GM18951 (cell line): ENCODE measurements at regions of chr15 and their contacts with region 1.

Region 1: DNA sequence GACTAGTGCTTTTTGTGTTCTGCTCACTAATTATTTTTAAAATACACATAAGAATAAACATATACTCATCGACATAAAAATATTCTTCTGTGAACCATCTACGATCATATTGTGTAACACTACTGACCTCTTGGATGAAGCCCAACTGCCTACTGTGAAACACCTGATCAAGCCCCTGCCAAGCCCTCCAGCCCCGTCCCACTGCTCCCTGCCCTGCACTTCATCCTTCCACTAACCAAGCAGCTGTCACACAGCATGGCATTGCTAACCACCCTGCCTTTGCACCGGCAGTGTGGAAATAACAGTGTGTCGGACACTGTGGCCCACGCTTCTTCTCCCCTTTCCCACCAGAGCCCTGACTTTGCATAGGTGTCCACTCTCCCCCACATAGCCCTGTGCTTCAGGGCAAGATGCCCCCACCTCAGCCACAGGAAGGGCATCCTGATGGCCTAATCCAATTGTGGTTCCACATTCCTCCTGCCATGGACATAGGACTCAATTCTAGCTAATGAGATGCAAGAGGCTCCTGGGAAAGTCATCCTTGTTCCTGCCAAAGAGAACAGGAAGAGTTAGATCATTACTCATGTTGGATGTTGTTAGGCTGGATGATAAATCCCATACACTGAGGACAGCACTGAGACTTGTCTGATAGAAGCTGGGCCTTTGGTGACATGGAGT is 35.0 kb upstream of the ARID3B start:
- POLR2A ChIP-seq: no peak

Region 2: GRCh38 chr15:74464216-74464615 is 41.8 kb before region 1 on chr15:
- in situ Hi-C with region 1: no loop called
- POLR2A ChIP-seq: no peak

Region 3: DNA sequence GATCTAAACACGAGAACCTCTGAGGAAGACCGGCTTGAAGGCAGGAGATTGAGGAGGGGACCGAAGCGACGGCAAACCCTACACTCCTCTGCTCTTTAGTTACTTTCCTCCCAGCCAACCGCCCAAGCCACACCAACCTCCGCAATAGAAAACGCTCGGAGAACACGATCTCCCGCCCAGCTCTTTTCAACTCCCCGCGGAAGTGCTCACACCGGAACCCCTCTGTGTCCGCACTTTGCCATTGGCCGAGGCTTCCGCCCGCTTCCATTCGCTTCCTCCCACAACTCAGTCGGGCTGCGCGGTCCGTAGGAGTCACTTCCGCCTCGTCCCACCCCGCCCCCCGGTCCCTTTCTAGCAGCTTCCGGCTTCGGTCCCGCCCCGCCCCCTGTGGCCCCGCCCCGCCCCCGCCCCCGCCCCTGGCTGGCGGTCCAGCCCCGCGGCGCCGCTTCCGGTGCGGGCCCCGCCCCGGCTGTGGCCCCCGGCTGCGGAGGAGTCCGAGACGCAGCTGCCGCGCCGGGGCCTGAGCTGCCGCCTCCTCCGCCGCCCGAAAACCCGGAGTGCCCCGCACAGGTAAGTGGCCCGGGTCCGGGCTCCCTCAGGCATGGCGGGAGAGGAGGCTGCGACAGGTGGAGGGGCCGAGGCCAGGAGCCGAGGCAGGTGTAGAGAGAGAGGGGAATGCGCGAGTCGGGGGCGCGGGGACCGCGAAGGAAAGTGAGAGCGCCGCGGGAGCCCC is 35.0 kb after region 1 on chr15 and contains the start of gene ARID3B:
- in situ Hi-C with region 1: loop called (anchors 5 kb)
- POLR2A ChIP-seq: peak; percentile 87

Region 4: GRCh38 chr15:74787251-74788041 is 281.5 kb after region 1 on chr15:
- in situ Hi-C with region 1: no loop called
- POLR2A ChIP-seq: no peak